Gastrocnemius medialis (tissue), 4 donors: ENCODE measurements at regions of chr22 and their contacts with region 1.

Region 1: DNA sequence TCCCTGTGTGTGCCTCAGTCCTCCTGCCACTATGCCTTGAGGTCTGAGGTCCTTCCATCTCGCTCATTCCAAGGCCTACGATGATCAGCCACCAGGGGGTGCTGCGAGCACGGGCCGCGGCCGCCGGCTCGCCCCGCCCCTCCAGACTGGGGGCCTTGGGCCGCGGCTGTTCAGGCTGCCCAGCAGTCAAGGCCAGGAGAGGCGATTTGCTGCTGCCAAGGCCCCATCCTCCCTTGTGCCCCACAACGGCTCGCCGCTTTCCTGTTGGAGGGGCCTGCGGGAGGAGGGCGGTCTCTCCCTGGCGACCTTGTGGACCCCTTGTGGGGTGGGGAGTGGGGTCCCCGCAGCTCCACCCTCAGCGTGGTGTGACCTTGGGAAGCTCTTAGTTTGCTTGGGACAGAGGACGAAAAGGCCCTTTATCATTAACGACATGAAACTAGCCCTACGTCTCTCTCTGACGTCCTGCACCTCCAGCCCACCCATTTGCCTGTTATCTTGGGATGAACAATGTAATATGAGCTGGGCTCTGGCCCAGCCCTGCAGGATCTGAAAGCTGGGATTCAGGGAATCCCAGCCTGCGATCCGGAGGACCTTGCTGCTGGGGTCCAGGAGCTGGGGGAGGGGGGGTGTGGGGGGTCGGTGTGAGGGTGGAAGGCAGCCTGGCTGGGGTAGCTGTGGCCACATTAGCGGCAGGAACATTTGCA is 5.3 kb upstream of the GALR3 start:
- DNase-seq: peak; percentile 51 to 74
- ATAC-seq: peak; percentile 92
- H3K4me3 ChIP-seq: peak overlapping the region; percentile 31 to 57 (median 48)
- H3K27ac ChIP-seq: peak overlapping the region in 1 of 4 donors; percentile 39
- H3K4me1 ChIP-seq: peaks cover 13 to 14% of the 10 kb centered on the region in 2 donors
- H3K27me3 ChIP-seq: no peaks in the 10 kb centered on the region
- CTCF ChIP-seq: peak; percentile 90 to 99 (median 96)
- POLR2A ChIP-seq: no peak

Region 2: GRCh38 chr22:37498289-37498909 is 319.5 kb before region 1 on chr22:
- in situ Hi-C with region 1: no loop called
- intact Hi-C with region 1: no loop called
- DNase-seq: no peak
- ATAC-seq: no peak
- H3K4me3 ChIP-seq: no peak overlapping the region
- H3K27ac ChIP-seq: no peak overlapping the region
- H3K4me1 ChIP-seq: peaks cover 21 to 42% of the 10 kb centered on the region in 2 donors
- H3K27me3 ChIP-seq: no peaks in the 10 kb centered on the region
- CTCF ChIP-seq: peak in 4 of 5 experiments; percentile 14 to 39 (median 26)
- POLR2A ChIP-seq: no peak

Region 3: DNA sequence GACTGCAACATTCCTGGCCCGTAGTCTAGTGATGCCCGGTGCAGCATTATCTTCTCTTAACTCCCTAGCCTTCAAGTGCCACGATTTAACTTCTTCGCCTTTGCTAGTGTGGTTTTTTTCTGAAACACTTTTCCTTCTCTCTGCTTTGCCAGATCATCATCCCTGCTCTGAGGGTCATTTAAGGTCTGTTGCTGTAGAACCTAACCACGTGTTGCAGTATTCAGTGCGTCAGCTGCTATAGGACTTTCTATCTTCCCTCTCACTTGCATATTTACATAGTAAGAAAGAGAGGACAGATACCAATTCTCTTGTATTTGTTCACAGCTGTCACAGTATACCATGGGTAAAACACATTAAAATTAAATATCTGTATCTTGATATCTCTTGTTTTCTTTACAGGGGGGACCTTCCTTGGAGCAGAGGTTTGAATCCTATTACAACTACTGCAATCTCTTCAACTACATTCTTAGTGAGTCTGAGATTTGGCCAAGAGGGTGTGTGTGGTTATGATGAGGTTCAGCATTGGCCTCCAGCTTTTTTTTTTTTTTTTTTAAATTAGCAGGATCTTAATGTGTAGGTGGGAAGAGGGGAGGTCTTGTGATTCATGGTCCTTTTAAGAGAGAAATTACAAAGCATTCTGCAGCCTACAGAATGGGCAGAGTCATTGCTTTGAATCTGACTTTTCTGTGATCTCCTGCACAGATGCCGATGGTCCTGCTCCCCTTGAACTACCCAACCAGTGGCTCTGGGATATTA is 44.9 kb after region 1 on chr22:
- in situ Hi-C with region 1: loop called (anchors 5 kb)
- intact Hi-C with region 1: loop called (anchors 1 kb)
- DNase-seq: no peak
- ATAC-seq: no peak
- H3K4me3 ChIP-seq: no peak overlapping the region
- H3K27ac ChIP-seq: peak overlapping the region; percentile 25 to 90 (median 44)
- H3K4me1 ChIP-seq: peaks cover 24 to 29% of the 10 kb centered on the region in 2 donors
- H3K27me3 ChIP-seq: no peaks in the 10 kb centered on the region
- CTCF ChIP-seq: no peak
- POLR2A ChIP-seq: no peak

Region 4: DNA sequence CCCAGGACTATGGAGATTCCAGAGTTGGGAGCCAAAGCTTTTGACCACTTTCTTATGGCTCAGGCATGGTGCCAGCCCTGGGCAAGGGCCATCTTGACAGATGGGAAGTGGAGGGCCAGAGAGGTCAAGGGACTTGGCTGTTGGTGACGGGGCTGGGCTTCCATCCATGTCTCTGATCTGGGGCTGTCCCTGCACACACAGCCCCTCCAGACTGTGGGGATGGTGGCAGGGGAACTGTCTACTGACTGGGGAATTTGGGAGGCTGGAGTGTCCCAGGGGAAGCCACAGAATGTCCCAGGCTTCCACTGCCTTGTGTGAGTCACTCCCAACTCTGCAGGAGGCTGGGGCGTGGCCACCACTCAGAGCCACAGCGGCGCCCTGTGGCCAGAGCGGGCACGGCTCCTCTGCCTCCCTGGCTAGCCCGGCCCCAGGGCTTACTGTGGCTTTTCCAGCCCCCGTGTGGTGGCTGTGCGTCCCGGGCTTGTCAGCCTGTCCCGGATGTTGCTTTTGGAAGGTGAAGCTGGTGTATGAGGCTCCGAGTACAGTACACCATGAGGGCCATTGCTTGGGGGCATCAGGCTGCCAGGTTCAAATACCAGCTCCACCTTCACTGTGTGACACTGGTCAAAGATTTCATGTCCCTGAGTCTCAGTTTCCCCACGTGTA is 116.0 kb after region 1 on chr22:
- in situ Hi-C with region 1: no loop called
- intact Hi-C with region 1: loop called (anchors 1 kb)
- DNase-seq: peak; percentile 79 to 88
- ATAC-seq: peak; percentile 96 to 99
- H3K4me3 ChIP-seq: no peak overlapping the region
- H3K27ac ChIP-seq: peak overlapping the region; percentile 63 to 83 (median 70)
- H3K4me1 ChIP-seq: peaks cover 11 to 12% of the 10 kb centered on the region in 2 donors
- H3K27me3 ChIP-seq: no peaks in the 10 kb centered on the region
- CTCF ChIP-seq: peak; percentile 90 to 99 (median 96)
- POLR2A ChIP-seq: no peak

Region 5: DNA sequence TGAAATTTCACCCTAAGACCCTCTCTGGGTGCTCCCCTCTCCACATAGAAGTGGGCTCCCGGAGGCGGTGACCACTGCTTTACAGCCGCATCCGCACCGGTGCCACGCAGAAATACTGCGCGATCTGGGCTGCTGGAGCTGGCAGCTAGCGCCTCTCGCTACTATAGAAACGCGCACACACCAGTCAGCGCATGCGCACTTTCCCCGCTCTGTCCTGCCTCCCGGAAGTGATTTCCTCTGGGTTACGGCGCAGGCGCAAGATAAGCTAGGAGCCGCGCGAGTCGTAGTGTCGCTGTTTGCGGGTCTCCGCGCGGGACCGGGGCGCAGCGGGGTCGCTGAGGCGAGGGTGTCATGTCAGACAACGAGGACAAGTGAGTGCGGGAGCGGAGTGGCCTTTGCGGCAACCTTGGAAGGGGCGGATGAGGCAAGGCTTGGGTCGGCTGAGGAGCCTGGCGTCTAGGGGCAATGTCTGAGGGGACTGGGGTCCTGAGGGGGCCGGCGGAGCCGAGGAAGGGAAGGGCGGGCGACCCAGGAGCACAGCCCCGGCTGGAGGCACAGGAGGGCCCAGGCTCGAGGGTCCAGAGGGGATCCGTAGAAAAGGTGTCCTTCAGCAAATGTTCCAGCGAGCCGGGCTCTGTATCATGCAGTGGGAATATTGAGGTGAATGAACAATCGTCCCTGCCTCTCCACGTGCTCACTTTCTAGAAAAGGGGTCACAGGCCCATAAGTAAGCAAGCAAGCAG is 135.8 kb after region 1 on chr22 and contains the starts of genes C22orf23 and POLR2F:
- in situ Hi-C with region 1: loop called in 2 of 4 experiments (anchors 10 to 25 kb)
- intact Hi-C with region 1: no loop called
- DNase-seq: peak; percentile 89 to 93
- ATAC-seq: peak; percentile 97 to 99
- H3K4me3 ChIP-seq: peak within 1 kb of the TSS; percentile 76 to 100 (median 96)
- H3K27ac ChIP-seq: peak within 1 kb of the TSS; percentile 77 to 91 (median 90)
- H3K4me1 ChIP-seq: peaks cover 18 to 31% of the 10 kb centered on the region in 2 donors
- H3K27me3 ChIP-seq: no peaks in the 10 kb centered on the region
- CTCF ChIP-seq: no peak
- POLR2A ChIP-seq: peak; percentile 67 to 81
- total RNA-seq, gene C22orf23: 0.20 to 1.1 (median 0.35) TPM in 3 of 4 donors, not detected in the other
- total RNA-seq, gene POLR2F: 84.1 to 152 (median 134) TPM

Region 6: DNA sequence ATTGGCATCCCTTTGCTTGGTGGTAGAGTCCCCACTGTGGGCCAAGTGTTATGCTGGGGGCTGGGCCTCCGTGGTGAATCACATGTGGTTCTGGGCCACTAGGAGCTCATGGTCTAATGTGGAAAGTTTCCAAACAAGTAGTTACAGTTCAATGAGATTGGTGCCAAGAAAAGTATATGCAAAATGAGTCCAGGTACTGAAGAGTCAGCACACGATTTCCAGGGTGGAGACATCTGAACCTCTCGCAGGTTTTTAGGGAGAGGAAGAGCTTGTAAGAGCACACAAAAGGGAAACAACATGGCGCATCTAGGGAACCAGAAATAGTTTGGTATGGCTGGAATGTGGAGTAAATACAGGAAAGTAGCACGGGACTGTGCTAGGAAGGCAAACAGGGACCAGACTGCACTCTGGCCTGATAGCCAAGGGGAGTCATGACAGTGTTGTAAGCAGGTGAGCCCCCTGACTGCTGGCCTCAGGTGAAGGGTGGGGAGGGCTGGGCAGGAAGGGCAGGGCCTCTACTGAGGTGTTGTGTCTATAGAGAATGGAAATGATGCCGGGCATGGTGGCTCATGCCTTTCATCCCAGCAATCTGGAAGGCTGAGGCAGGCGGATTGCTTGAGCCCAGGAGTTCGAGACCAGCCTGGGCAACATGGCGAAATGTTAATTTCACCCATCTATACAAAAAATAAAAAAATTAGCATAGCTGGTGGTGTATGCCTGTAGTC is 148.2 kb after region 1 on chr22:
- in situ Hi-C with region 1: loop called in 1 of 4 experiments (anchors 25 kb)
- intact Hi-C with region 1: loop called (anchors 2 kb)
- DNase-seq: no peak
- ATAC-seq: no peak
- H3K4me3 ChIP-seq: no peak overlapping the region
- H3K27ac ChIP-seq: no peak overlapping the region
- H3K4me1 ChIP-seq: peaks cover 4 to 5% of the 10 kb centered on the region in 2 donors
- H3K27me3 ChIP-seq: no peaks in the 10 kb centered on the region
- CTCF ChIP-seq: no peak
- POLR2A ChIP-seq: no peak